HCT116 (cell line): ENCODE measurements at regions of chr16 and their contacts with region 1.

Region 1: GRCh38 chr16:22077700-22078313 is 14.5 kb upstream of the VWA3A start:
- DNase-seq: peak; percentile 39
- ATAC-seq: peak; percentile 89
- H3K4me3 ChIP-seq: no peak overlapping the region
- H3K27ac ChIP-seq: no peak overlapping the region
- H3K4me1 ChIP-seq: peaks cover 0 to 2% of the 10 kb centered on the region in 2 experiments; a peak in 2 of 4 replicates
- H3K27me3 ChIP-seq: no peaks in the 10 kb centered on the region
- CTCF ChIP-seq: peak; percentile 70 to 89 (median 86)
- POLR2A ChIP-seq: no peak
- RAD21 ChIP-seq: peak; percentile 93

Region 2: GRCh38 chr16:21952793-21953540 is 124.8 kb before region 1 on chr16 and contains the start of gene UQCRC2:
- CTCF ChIA-PET with region 1: interaction called, 37 read pairs
- POLR2A ChIA-PET with region 1: interaction called, 3 read pairs
- RAD21 ChIA-PET with region 1: interaction called, 6 to 7 read pairs
- intact Hi-C with region 1: loop called (anchors 5 kb)
- DNase-seq: peak; percentile 93
- ATAC-seq: peak; percentile 93
- H3K4me3 ChIP-seq: peak within 1 kb of the TSS; percentile 96 to 98
- H3K27ac ChIP-seq: peak within 1 kb of the TSS; percentile 76
- H3K4me1 ChIP-seq: peaks cover 9 to 19% of the 10 kb centered on the region in 2 experiments
- H3K27me3 ChIP-seq: no peaks in the 10 kb centered on the region
- CTCF ChIP-seq: no peak
- POLR2A ChIP-seq: peak; percentile 67
- RAD21 ChIP-seq: no peak
- total RNA-seq, gene UQCRC2: 249 TPM

Region 3: GRCh38 chr16:21989133-21989532 is 88.7 kb before region 1 on chr16:
- CTCF ChIA-PET with region 1: interaction called, 18 read pairs
- POLR2A ChIA-PET with region 1: no interaction called
- RAD21 ChIA-PET with region 1: no interaction called
- intact Hi-C with region 1: no loop called
- DNase-seq: no peak
- ATAC-seq: no peak
- H3K4me3 ChIP-seq: no peak overlapping the region
- H3K27ac ChIP-seq: no peak overlapping the region
- H3K4me1 ChIP-seq: peaks cover 0 to 22% of the 10 kb centered on the region in 2 experiments; a peak in 2 of 4 replicates
- H3K27me3 ChIP-seq: no peaks in the 10 kb centered on the region
- CTCF ChIP-seq: no peak
- POLR2A ChIP-seq: no peak
- RAD21 ChIP-seq: no peak

Region 4: DNA sequence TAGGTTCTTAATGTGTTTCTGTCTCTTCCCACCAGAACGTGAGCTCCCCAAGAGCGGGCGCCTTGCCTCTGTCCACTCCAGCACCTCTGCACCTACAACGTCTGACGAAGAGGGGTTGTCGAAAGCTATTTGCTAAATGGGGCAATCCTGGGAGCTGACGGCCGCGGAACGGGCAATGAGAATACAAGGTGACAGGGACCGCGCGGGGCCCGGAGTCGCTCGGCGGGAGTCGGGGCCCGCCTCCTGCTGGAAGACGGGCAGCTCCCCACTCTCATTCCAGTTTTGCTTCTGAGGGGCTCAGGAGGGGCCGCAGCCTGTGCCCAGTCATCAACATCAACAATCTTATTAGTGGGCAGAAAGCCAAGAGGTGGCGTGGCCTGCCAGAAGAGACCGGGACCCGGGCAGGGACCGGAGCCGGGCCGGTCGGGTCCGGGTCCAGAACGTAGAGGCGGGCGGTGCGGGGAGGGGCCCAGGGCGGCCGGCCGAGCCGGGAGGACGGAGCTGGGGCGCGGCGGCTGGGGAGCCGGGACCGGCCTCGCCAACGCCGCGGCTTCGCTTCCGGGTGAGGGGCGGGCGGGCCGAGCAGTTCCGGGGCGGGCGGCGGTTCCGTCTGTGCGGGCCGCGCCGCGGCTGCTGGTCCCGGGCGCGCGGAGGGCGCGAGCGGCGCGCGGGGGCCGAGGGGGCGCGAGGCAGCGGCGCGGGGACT is 70.1 kb before region 1 on chr16 and contains the start of gene MOSMO:
- CTCF ChIA-PET with region 1: interaction called, 140 read pairs
- POLR2A ChIA-PET with region 1: no interaction called
- RAD21 ChIA-PET with region 1: interaction called, 10 to 18 read pairs
- intact Hi-C with region 1: loop called (anchors 2 kb)
- DNase-seq: no peak
- ATAC-seq: peak; percentile 85
- H3K4me3 ChIP-seq: peak within 1 kb of the TSS; percentile 88 to 90
- H3K27ac ChIP-seq: peak within 1 kb of the TSS; percentile 85
- H3K4me1 ChIP-seq: peaks cover 17 to 42% of the 10 kb centered on the region in 2 experiments
- H3K27me3 ChIP-seq: no peaks in the 10 kb centered on the region
- CTCF ChIP-seq: no peak
- POLR2A ChIP-seq: no peak
- RAD21 ChIP-seq: no peak
- total RNA-seq, gene MOSMO: 27.6 TPM

Region 5: DNA sequence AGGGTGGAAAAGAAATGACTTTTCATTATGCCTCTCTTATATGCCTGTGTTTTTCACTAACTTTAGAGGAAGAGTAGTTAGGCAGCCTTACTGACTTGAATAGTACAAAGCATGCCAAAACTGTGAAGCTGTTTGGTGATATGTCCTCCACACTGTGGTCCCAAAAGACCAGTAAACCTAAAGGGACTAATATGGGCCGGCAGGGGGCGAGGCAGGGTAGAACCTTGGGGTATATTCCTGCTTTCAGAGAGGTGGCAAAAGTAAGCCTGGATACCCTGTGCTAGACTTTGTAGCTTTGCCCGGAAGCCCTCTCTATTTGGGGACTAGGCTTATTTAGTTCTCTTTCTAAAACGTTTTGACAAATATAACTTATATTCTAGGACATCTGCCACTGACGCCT is 21.9 kb before region 1 on chr16:
- CTCF ChIA-PET with region 1: interaction called, 24 read pairs
- POLR2A ChIA-PET with region 1: no interaction called
- RAD21 ChIA-PET with region 1: no interaction called
- intact Hi-C with region 1: loop called (anchors 1 kb)
- DNase-seq: no peak
- ATAC-seq: no peak
- H3K4me3 ChIP-seq: no peak overlapping the region
- H3K27ac ChIP-seq: no peak overlapping the region
- H3K4me1 ChIP-seq: peaks cover 22 to 26% of the 10 kb centered on the region in 2 experiments
- H3K27me3 ChIP-seq: no peaks in the 10 kb centered on the region
- CTCF ChIP-seq: no peak
- POLR2A ChIP-seq: no peak
- RAD21 ChIP-seq: no peak

Region 6: GRCh38 chr16:22089910-22090309 is 12.1 kb after region 1 on chr16:
- CTCF ChIA-PET with region 1: interaction called, 12 read pairs
- POLR2A ChIA-PET with region 1: no interaction called
- RAD21 ChIA-PET with region 1: interaction called in 1 of 2 experiments, 3 read pairs
- intact Hi-C with region 1: no loop called
- DNase-seq: no peak
- ATAC-seq: no peak
- H3K4me3 ChIP-seq: no peak overlapping the region
- H3K27ac ChIP-seq: no peak overlapping the region
- H3K4me1 ChIP-seq: no peaks in the 10 kb centered on the region
- H3K27me3 ChIP-seq: no peaks in the 10 kb centered on the region
- CTCF ChIP-seq: no peak
- POLR2A ChIP-seq: no peak
- RAD21 ChIP-seq: no peak

Region 7: DNA sequence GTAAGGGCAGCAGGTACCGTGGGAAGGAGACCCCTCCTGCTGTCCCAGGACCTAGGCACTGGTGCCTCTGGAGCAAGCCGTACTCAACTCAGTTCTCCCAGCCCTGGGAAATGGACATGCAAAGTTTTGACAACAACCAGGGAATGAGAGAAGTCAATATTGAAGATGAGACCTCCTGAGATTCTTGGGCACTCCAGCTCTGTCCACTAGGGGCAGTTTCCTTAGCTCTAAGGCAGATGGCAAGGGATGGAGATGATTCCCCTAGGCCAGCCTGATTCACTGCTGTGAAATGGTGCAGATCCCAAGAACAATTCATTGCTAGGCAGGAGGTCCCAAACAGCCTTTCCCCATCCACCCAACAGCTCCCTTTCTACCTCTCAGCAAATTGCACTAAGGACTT is 63.9 kb after region 1 on chr16:
- CTCF ChIA-PET with region 1: interaction called, 10 read pairs
- POLR2A ChIA-PET with region 1: no interaction called
- RAD21 ChIA-PET with region 1: no interaction called
- intact Hi-C with region 1: no loop called
- DNase-seq: peak; percentile 21
- ATAC-seq: peak; percentile 94
- H3K4me3 ChIP-seq: no peak overlapping the region
- H3K27ac ChIP-seq: no peak overlapping the region
- H3K4me1 ChIP-seq: no peaks in the 10 kb centered on the region
- H3K27me3 ChIP-seq: peaks cover 23% of the 10 kb centered on the region; the same call in 1 of the 2 replicates
- CTCF ChIP-seq: peak in 2 of 3 experiments; percentile 73 to 81; a peak in 4 of 6 replicates
- POLR2A ChIP-seq: no peak
- RAD21 ChIP-seq: no peak; the same call in 1 of the 2 replicates